HepG2 (cell line): ENCODE measurements at regions of chr5 and their contacts with region 1.

Region 1: GRCh38 chr5:119435436-119436132 is 16.7 kb upstream of the HSD17B4 start:
- DNase-seq: peak; percentile 55
- ATAC-seq: peak; percentile 83
- H3K4me3 ChIP-seq: peak overlapping the region in 2 of 3 experiments; percentile 18 to 34; a peak in 4 of 6 replicates
- H3K27ac ChIP-seq: no peak overlapping the region
- H3K4me1 ChIP-seq: peaks cover 41% of the 10 kb centered on the region
- H3K27me3 ChIP-seq: no peaks in the 10 kb centered on the region; a peak in 1 of 5 replicates
- CTCF ChIP-seq: peak; percentile 82
- EP300 ChIP-seq: no peak
- POLR2A ChIP-seq: no peak
- RAD21 ChIP-seq: no peak; the same call in 1 of the 2 replicates

Region 2: GRCh38 chr5:119328753-119329602 is 106.6 kb before region 1 on chr5:
- CTCF ChIA-PET with region 1: no interaction called
- POLR2A ChIA-PET with region 1: no interaction called
- in situ Hi-C with region 1: no loop called
- intact Hi-C with region 1: no loop called
- DNase-seq: no peak
- ATAC-seq: no peak
- H3K4me3 ChIP-seq: no peak overlapping the region
- H3K27ac ChIP-seq: no peak overlapping the region
- H3K4me1 ChIP-seq: peaks cover 6% of the 10 kb centered on the region
- H3K27me3 ChIP-seq: no peaks in the 10 kb centered on the region
- CTCF ChIP-seq: no peak
- EP300 ChIP-seq: no peak
- POLR2A ChIP-seq: no peak
- RAD21 ChIP-seq: no peak

Region 3: GRCh38 chr5:119418531-119419116 is 17.0 kb before region 1 on chr5:
- CTCF ChIA-PET with region 1: no interaction called
- POLR2A ChIA-PET with region 1: no interaction called
- in situ Hi-C with region 1: no loop called
- intact Hi-C with region 1: no loop called
- DNase-seq: no peak
- ATAC-seq: peak; percentile 43; the same call in 2 of the 3 replicates
- H3K4me3 ChIP-seq: no peak overlapping the region
- H3K27ac ChIP-seq: no peak overlapping the region
- H3K4me1 ChIP-seq: peaks cover 7% of the 10 kb centered on the region
- H3K27me3 ChIP-seq: no peaks in the 10 kb centered on the region; a peak in 1 of 5 replicates
- CTCF ChIP-seq: no peak
- EP300 ChIP-seq: no peak
- POLR2A ChIP-seq: no peak
- RAD21 ChIP-seq: no peak

Region 4: DNA sequence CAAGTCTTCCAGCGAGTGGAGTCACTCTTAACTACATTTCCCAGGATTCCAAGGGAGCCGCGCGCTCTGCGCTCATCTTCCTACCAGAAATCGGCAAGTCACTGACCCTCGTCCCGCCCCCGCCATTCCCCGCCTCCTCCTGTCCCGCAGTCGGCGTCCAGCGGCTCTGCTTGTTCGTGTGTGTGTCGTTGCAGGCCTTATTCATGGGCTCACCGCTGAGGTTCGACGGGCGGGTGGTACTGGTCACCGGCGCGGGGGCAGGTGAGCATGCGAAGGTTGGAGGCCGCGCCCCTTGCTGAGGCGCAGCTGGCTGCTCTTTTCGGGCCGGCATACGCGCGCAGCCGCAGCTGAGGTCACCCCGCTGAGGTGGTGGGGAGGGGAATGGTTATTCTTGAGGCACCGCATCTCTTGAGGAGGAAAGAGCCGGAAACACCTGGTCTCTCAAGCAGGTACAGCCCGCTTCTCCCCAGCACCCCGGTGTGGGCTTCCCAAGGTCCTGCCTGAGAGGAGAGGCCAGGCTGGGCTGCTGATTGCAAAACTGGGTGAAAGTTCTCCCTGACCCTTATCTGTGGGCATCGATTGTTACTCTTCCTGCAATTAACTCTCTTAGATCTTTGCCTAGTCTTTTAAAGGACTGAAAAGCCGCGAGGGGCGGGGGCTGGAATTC is 16.9 kb after region 1 on chr5 and contains the start of gene HSD17B4:
- CTCF ChIA-PET with region 1: no interaction called
- POLR2A ChIA-PET with region 1: interaction called, 25 read pairs
- in situ Hi-C with region 1: no loop called
- intact Hi-C with region 1: loop called (anchors 2 kb)
- DNase-seq: peak; percentile 90
- ATAC-seq: peak; percentile 94
- H3K4me3 ChIP-seq: peak within 1 kb of the TSS; percentile 89 to 98 (median 97)
- H3K27ac ChIP-seq: peak within 1 kb of the TSS; percentile 100
- H3K4me1 ChIP-seq: peaks cover 31% of the 10 kb centered on the region
- H3K27me3 ChIP-seq: no peaks in the 10 kb centered on the region; a peak in 1 of 5 replicates
- CTCF ChIP-seq: no peak; the same call in none of the 2 replicates
- EP300 ChIP-seq: peak; percentile 26 to 93; a peak in 3 of 4 replicates
- POLR2A ChIP-seq: peak; percentile 79 to 85
- RAD21 ChIP-seq: peak; percentile 50
- total RNA-seq, gene HSD17B4: 399 and 508 TPM in 2 replicates